GM13977 (cell line): ENCODE measurements at regions of chr11 and their contacts with region 1.

Region 1: GRCh38 chr11:35800970-35801953 is 138.7 kb downstream of the TRIM44 start:
- DNase-seq: peak; percentile 16
- CTCF ChIP-seq: no peak

Region 2: GRCh38 chr11:35689081-35689996 is 111.9 kb before region 1 on chr11:
- in situ Hi-C with region 1: no loop called
- DNase-seq: no peak
- CTCF ChIP-seq: no peak

Region 3: GRCh38 chr11:36265793-36266628 is 464.7 kb after region 1 on chr11:
- in situ Hi-C with region 1: loop called (anchors 25 kb)
- DNase-seq: peak; percentile 67
- CTCF ChIP-seq: peak; percentile 94